Mammary epithelial cell (primary cell): ENCODE measurements at regions of chr5 and their contacts with region 1.

Region 1: GRCh38 chr5:181191529-181192394 is 13.2 kb downstream of the TRIM7 start:
- DNase-seq: peak; percentile 96
- H3K4me3 ChIP-seq: peak overlapping the region; percentile 77 to 87 (median 78)
- H3K27ac ChIP-seq: peak overlapping the region; percentile 9
- H3K4me1 ChIP-seq: peaks cover 22% of the 10 kb centered on the region
- H3K27me3 ChIP-seq: no peaks in the 10 kb centered on the region
- CTCF ChIP-seq: no peak

Region 2: DNA sequence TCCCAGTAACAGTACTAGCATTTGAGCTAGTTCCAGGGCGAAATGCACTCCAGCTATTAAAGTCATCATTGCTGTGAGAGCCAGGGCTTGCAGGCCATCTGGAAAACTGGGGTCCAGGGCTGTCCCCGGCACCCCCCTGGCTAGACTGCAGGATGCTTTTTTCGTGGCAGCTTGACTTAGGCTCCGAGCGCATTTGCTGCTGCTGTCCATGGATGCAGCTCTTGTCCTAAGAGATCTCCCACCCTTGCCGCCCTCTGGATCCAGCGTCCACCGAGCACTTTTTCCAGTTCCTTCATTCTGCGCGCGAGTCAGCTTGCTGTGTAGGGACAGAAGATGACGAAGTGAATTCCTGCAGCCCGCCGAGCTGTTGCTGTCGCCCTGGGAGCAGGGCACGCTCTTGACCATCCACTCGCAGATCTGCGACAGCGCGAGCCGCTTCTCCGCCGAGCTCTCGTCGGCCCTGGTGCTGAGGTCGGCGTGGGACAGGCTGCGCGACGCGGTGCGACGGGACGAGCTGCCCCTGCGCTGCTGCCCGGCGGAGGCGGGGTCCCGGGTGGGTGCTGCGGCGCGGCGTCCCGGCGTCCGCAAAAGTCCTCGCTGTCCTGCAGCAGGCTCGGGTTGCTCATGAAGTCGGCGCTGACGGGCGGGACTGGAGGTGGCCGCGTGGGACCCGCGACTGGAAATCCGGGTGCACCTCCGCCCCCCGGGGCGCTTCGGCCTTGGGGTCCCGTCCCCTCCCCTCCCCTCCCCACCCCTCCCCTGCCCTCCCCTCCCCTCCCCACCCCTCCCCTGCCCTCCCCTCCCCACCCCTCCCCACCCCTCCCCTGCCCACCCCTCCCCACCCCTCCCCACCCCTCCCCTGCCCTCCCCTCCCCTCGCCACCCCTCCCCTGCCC is 91.4 kb before region 1 on chr5:
- CTCF ChIA-PET with region 1: no interaction called
- dilution Hi-C with region 1: no loop called
- in situ Hi-C with region 1: no loop called
- intact Hi-C with region 1: no loop called
- DNase-seq: no peak
- H3K4me3 ChIP-seq: peak overlapping the region in 1 of 3 experiments; percentile 34
- H3K27ac ChIP-seq: no peak overlapping the region
- H3K4me1 ChIP-seq: no peaks in the 10 kb centered on the region
- H3K27me3 ChIP-seq: peaks cover 2% of the 10 kb centered on the region
- CTCF ChIP-seq: no peak

Region 3: GRCh38 chr5:181114844-181115778 is 76.7 kb before region 1 on chr5:
- CTCF ChIA-PET with region 1: interaction called, 10 read pairs
- dilution Hi-C with region 1: no loop called
- in situ Hi-C with region 1: no loop called
- intact Hi-C with region 1: no loop called
- DNase-seq: peak; percentile 68
- H3K4me3 ChIP-seq: peak overlapping the region in 2 of 3 experiments; percentile 31 to 39
- H3K27ac ChIP-seq: no peak overlapping the region
- H3K4me1 ChIP-seq: peaks cover 19% of the 10 kb centered on the region
- H3K27me3 ChIP-seq: no peaks in the 10 kb centered on the region
- CTCF ChIP-seq: no peak

Region 4: GRCh38 chr5:181133610-181134231 is 58.0 kb before region 1 on chr5:
- CTCF ChIA-PET with region 1: no interaction called
- dilution Hi-C with region 1: no loop called
- in situ Hi-C with region 1: no loop called
- intact Hi-C with region 1: no loop called
- DNase-seq: peak; percentile 70
- H3K4me3 ChIP-seq: no peak overlapping the region
- H3K27ac ChIP-seq: no peak overlapping the region
- H3K4me1 ChIP-seq: peaks cover 9% of the 10 kb centered on the region
- H3K27me3 ChIP-seq: peaks cover 1% of the 10 kb centered on the region
- CTCF ChIP-seq: no peak

Region 5: DNA sequence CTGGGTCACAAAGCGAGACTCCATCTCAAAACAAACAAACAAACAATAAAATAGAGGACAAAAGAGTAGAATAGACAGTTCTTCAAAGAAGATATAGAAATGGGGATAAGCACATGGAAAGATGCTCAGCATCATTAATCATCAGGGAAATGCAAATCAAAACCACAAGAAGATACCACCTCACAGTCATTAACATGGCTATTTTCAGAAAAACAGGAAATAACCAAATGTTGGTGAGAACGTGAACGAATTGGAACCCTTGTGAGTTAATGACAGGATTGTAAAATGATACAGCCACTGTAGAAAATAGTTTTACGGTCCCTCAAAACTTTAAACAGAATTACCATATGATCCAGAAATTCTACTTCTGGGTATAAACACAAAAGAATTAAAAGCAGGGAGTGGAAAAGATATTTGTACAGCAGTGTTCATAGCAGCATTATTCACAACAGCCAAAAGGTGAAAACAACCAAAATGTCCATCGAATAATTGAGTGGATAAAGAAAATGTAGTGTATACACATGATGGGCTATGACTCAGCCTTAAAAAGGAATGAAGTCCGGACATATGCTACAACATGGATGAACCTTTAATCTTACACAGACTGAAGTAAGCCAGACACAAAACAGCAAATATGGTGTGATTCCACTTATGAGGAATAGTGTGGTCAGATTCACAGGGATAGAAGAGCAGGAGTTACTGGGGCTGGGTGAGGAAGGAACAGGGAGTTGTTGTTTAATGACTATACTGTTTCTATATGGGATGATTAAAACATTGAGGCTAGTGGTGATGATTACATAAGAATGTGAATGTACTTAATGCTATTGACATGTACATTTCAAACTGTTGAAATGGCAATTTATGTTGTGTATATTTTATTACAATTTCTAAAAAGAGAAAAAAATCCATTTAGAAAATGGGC is 24.7 kb before region 1 on chr5:
- CTCF ChIA-PET with region 1: no interaction called
- dilution Hi-C with region 1: no loop called
- in situ Hi-C with region 1: no loop called
- intact Hi-C with region 1: no loop called
- DNase-seq: no peak
- H3K4me3 ChIP-seq: no peak overlapping the region
- H3K27ac ChIP-seq: no peak overlapping the region
- H3K4me1 ChIP-seq: peaks cover 4% of the 10 kb centered on the region
- H3K27me3 ChIP-seq: no peaks in the 10 kb centered on the region
- CTCF ChIP-seq: no peak

Region 6: DNA sequence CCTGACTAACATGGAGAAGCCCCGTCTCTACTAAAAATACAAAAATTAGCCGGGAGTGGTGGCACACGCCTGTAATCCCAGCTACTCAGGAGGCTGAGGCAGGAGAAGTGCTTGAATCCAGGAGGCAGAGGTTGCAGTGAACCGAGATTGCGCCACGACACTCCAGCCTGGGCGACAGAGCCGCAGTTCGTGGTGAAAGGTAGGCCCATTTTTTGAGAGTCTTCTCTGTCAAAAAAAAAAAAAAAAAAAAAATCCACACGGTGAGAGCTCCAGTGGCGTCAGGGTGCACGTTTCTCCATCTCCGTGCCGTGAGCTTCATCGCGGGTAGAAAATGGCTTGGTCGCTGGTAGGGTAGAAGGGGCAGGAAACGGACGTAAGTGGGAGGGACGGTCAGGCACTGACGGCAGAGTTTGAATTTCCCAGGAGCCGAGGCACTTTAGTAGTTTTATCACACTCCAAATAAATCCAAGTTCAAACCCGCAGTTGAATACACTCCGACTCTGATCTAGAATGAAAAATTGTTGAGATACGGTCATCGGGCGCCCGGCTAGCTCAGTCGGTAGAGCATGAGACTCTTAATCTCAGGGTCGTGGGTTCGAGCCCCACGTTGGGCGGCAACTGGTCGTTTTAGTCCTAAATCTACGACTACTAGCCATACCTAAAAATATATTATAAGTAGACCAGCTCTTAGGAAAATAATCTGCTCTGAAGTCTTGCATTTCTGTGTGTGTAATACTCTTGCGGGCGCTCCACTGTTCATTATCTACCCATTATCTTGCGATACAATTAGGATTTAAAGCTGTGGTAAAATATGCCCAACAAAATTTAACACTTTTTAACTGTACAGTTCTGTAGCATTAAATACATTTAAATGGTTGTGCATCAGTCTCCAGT is 15.7 kb after region 1 on chr5:
- CTCF ChIA-PET with region 1: interaction called, 3 read pairs
- dilution Hi-C with region 1: no loop called
- in situ Hi-C with region 1: no loop called
- intact Hi-C with region 1: loop called (anchors 1 kb)
- DNase-seq: peak; percentile 91
- H3K4me3 ChIP-seq: peak overlapping the region; percentile 48 to 61 (median 61)
- H3K27ac ChIP-seq: peak overlapping the region; percentile 52
- H3K4me1 ChIP-seq: peaks cover 22% of the 10 kb centered on the region
- H3K27me3 ChIP-seq: no peaks in the 10 kb centered on the region
- CTCF ChIP-seq: no peak

Region 7: DNA sequence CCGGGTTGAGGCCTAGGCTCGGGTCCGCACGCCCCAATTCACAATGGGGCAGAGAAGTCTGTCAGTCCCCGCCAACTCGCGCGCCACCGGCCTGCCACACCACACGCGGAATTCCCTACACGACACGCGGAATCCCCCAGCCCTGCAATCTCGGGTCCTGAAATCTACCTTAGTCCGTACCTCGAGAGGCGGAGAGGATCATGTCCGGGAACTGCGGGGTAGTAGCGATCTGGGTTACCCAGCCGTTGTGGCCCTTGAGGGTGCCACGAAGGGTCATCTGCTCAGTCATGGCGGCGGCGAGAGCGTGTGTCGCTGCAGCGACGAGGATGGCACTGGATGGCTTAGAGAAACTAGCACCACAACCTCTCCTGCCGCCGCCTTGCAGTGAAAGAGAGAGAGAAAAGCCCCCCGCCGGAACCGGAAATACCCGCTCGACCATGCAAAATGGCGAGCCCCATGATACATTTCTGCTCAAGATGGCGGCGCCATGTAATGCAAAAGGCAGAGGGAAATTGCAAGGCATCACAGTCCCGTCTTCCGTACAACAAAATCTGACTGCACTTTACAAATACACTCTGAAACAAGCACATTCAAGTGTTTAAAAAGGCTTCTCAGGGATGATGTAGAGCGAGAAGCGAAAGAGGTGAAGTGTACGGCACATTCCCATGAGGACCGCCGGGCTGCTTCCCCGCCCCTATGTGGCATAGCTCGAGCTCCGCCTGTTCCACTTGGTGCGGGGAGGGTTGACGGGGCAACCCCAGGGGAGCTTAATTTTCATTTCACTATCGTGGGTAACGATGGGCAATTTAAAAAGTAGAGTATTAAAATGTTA is 52.0 kb after region 1 on chr5 and contains the start of gene RACK1:
- CTCF ChIA-PET with region 1: no interaction called
- dilution Hi-C with region 1: loop called (anchors 5 kb)
- in situ Hi-C with region 1: no loop called
- intact Hi-C with region 1: loop called (anchors 1 kb)
- DNase-seq: peak; percentile 86
- H3K4me3 ChIP-seq: peak within 1 kb of the TSS; percentile 96 to 100 (median 98)
- H3K27ac ChIP-seq: peak within 1 kb of the TSS; percentile 84
- H3K4me1 ChIP-seq: peaks cover 35% of the 10 kb centered on the region
- H3K27me3 ChIP-seq: no peaks in the 10 kb centered on the region
- CTCF ChIP-seq: no peak
- total RNA-seq, gene RACK1: 2,031 to 4,986 TPM